Sigmoid colon (tissue), 7 donors: ENCODE measurements at regions of chr12 and their contacts with region 1.

Region 1: DNA sequence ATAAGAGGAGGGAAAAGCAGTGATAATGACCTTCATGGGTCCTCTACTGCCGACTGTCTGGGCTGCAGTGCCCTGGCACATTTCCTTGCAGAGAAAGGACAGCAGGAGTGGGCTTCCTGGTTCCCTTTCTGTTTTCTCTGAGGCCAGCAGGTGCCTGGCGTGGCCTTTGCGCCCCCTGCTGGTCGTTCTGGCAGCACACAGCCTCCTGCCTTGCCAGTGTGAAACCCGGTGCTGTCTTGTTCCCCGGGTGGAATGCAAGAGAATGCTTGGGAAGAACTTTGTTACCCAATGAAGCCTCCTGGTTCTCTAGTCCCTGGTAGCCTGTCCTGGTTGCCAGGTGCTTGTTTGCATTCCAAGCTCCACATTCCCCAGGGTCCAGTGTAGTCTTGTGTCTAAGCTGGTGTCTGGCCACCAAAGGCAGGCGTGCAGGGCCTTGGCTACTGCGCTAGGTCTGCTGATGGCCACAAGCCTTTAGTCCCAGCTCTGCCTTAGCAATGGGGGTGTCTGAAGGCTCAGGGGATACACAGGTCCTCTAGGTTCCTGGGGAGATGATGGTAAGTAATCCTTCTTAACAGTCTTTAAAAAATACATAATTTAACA is 1392.4 kb upstream of the TMEM132C start:
- DNase-seq: peak; percentile 70
- H3K4me3 ChIP-seq: no peak overlapping the region
- H3K27ac ChIP-seq: no peak overlapping the region
- H3K4me1 ChIP-seq: no peaks in the 10 kb centered on the region
- H3K27me3 ChIP-seq: no peaks in the 10 kb centered on the region
- CTCF ChIP-seq: peak; percentile 29 to 86 (median 59)
- EP300 ChIP-seq: no peak
- POLR2A ChIP-seq: no peak

Region 2: DNA sequence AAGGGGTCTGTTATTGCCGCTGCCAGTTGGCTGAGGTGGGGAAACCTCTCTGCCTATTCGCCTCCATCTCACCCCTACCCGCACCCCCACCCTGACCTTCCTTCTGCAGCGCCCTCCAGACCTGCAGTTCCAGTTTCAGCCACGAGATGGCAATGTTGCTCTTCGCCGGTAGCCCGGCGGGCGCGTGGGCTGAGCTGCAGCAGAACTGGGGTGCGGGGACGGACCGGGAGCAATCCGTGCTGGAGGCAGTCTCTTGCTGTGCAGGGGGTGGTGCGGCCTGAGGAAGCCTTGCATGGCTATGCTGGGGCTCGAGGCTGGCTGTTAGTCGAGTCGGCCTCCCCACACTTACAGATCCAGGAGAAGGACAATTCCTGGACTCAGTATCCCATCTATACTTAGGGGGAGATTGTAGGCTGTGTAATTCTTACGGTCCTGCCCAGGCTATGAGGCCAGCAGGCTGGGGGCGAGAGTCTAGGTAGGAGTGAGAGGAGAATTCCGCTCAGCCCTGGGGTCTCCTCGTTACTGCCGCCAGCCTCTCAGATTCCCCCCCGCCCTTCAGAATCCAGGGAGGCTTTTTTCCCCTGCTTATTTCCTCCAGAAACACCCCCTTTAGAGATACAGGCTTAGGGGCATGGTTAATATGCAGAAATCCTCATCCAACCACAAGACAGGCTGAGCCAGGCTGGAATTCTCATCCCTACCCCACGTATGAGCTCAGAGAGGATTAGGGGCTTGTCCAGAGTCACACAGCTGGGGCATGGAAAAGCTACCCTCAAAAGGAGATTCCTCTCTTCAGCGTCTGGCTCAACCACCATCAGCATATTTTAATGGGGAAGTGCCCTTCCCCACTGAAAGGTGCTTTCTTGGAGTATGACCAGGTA is 1691.1 kb before region 1 on chr12:
- intact Hi-C with region 1: loop called (anchors 5 kb)
- DNase-seq: peak; percentile 80
- H3K4me3 ChIP-seq: no peak overlapping the region
- H3K27ac ChIP-seq: no peak overlapping the region
- H3K4me1 ChIP-seq: peaks cover 0 to 29% (median 26%) of the 10 kb centered on the region in 4 donors
- H3K27me3 ChIP-seq: peaks cover 7 to 35% (median 16%) of the 10 kb centered on the region in 3 donors
- CTCF ChIP-seq: peak; percentile 90 to 99 (median 94)
- EP300 ChIP-seq: no peak
- POLR2A ChIP-seq: no peak

Region 3: GRCh38 chr12:125330645-125331341 is 1543.7 kb before region 1 on chr12:
- intact Hi-C with region 1: loop called (anchors 10 kb)
- DNase-seq: peak; percentile 73
- H3K4me3 ChIP-seq: peak overlapping the region; percentile 1 to 45 (median 38)
- H3K27ac ChIP-seq: no peak overlapping the region
- H3K4me1 ChIP-seq: peaks cover 0 to 10% (median 9%) of the 10 kb centered on the region in 4 donors
- H3K27me3 ChIP-seq: peaks cover 0 to 36% (median 8%) of the 10 kb centered on the region in 3 donors
- CTCF ChIP-seq: peak; percentile 20 to 90 (median 64)
- EP300 ChIP-seq: no peak
- POLR2A ChIP-seq: no peak

Region 4: DNA sequence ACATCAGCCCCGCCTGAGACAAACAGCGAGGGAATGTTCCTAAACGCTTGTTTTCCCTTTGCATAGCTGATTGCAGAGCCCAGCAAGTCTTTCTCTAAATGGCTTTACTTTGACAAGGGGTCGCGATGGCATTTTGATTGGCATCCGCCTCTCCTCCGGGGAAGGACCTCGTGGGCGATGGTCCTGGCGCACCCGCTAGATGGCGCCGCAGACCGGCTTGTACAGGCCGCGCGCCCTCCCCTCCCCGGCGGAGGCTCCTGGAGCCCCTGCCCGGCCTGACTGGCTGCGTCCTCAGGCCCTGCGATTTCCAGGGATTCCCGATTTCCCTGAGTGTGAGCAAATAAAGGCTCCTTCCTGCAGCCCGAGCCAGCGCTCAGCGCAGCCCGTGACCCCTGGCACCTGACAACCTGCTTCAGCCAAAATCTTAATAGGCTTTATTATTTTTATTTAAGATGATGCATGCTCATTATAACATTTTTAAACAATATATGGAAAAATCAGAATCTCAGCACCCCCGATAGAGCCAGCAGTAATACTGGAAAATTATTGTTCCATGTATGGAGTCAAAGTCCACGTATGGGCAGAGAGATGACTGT is 1341.0 kb before region 1 on chr12:
- intact Hi-C with region 1: loop called (anchors 5 kb)
- DNase-seq: no peak
- H3K4me3 ChIP-seq: peak overlapping the region in 1 of 4 donors; percentile 1
- H3K27ac ChIP-seq: no peak overlapping the region
- H3K4me1 ChIP-seq: peaks cover 0 to 8% (median 2%) of the 10 kb centered on the region in 4 donors
- H3K27me3 ChIP-seq: peaks cover 0 to 22% (median 0%) of the 10 kb centered on the region in 3 donors
- CTCF ChIP-seq: peak in 3 of 4 experiments; percentile 39 to 66 (median 55)
- EP300 ChIP-seq: no peak
- POLR2A ChIP-seq: no peak

Region 5: DNA sequence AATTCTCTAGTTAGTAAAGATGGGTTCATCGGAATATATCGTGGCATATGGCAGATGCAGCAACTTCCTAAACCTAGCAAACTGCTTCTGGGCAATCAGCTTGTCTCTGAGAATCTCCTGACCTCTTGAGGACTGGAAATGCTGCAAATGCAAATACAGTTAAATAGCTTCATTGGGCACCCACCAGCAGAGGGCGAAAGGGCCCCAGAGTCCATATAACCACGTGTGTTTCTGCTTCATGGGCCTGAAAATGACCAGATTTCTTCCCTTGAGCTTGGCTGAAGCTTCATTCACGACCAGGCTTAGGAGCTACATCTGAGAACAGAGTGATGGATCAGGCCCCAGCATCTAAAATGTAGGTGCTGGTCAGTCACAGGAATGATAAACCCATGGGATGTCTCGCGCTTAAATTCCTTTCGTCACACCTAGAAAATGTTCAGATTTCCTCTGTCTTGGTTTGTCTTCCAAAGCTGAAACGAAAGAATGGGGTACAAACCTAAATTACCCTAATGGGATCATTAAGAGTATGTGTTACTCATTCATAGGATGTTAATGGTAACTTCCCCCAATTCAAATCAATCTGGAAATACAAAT is 90.1 kb before region 1 on chr12:
- intact Hi-C with region 1: loop called (anchors 10 kb)
- DNase-seq: no peak
- H3K4me3 ChIP-seq: no peak overlapping the region
- H3K27ac ChIP-seq: no peak overlapping the region
- H3K4me1 ChIP-seq: no peaks in the 10 kb centered on the region
- H3K27me3 ChIP-seq: no peaks in the 10 kb centered on the region
- CTCF ChIP-seq: peak in 2 of 4 experiments; percentile 24 to 30
- EP300 ChIP-seq: no peak
- POLR2A ChIP-seq: no peak